Activated T-helper 2 cell treated with anti-CD3 and anti-CD28 coated beads, Interferon-gamma antibody, Interleukin-2, Interleukin-4, amounts not matched to agents 10 μg/mL and 5 μg/mL and 100 μg/mL, durations not matched to agents 14 hours and 24 hours and 36 hours (primary cell): ENCODE measurements at regions of chr1 and their contacts with region 1.

Region 1: GRCh38 chr1:180502360-180503273 is at the start of gene ACBD6:
- DNase-seq: peak; percentile 84
- H3K4me3 Mint-ChIP-seq: peak within 1 kb of the TSS; percentile 98
- H3K27ac Mint-ChIP-seq: peak within 1 kb of the TSS; percentile 96
- H3K4me1 Mint-ChIP-seq: peaks cover 22% of the 10 kb centered on the region
- H3K27me3 Mint-ChIP-seq: no peaks in the 10 kb centered on the region
- total RNA-seq, gene ACBD6: 48.9 and 50.1 TPM in 2 replicates

Region 2: GRCh38 chr1:180571832-180572636 is 69.4 kb after region 1 on chr1:
- intact Hi-C with region 1: loop called (anchors 2 kb)
- DNase-seq: no peak
- H3K4me3 Mint-ChIP-seq: peak overlapping the region; percentile 0
- H3K27ac Mint-ChIP-seq: peak overlapping the region; percentile 18
- H3K4me1 Mint-ChIP-seq: peaks cover 24% of the 10 kb centered on the region
- H3K27me3 Mint-ChIP-seq: peaks cover 5% of the 10 kb centered on the region

Region 3: GRCh38 chr1:181014477-181015250 is 512.0 kb after region 1 on chr1:
- intact Hi-C with region 1: loop called (anchors 2 kb)
- DNase-seq: no peak
- H3K4me3 Mint-ChIP-seq: no peak overlapping the region
- H3K27ac Mint-ChIP-seq: no peak overlapping the region
- H3K4me1 Mint-ChIP-seq: peaks cover 47% of the 10 kb centered on the region
- H3K27me3 Mint-ChIP-seq: no peaks in the 10 kb centered on the region

Region 4: GRCh38 chr1:181105134-181106021 is 602.8 kb after region 1 on chr1:
- intact Hi-C with region 1: loop called (anchors 5 kb)
- DNase-seq: peak; percentile 88
- H3K4me3 Mint-ChIP-seq: peak overlapping the region; percentile 85
- H3K27ac Mint-ChIP-seq: peak overlapping the region; percentile 79
- H3K4me1 Mint-ChIP-seq: peaks cover 59% of the 10 kb centered on the region
- H3K27me3 Mint-ChIP-seq: peaks cover 27% of the 10 kb centered on the region